CD4-positive, alpha-beta T cell (primary cell): ENCODE measurements at regions of chr6 and their contacts with region 1.

Region 1: GRCh38 chr6:14428269-14428668 is 310.7 kb downstream of the CD83 start:
- DNase-seq: no peak
- ATAC-seq: no peak
- H3K4me3 ChIP-seq: no peak overlapping the region
- H3K4me3 Mint-ChIP-seq: no peak overlapping the region
- H3K27ac ChIP-seq: no peak overlapping the region
- H3K27ac Mint-ChIP-seq: no peak overlapping the region
- H3K4me1 ChIP-seq: no peaks in the 10 kb centered on the region
- H3K4me1 Mint-ChIP-seq: no peaks in the 10 kb centered on the region
- H3K27me3 ChIP-seq: no peaks in the 10 kb centered on the region
- H3K27me3 Mint-ChIP-seq: no peaks in the 10 kb centered on the region
- CTCF ChIP-seq: no peak

Region 2: GRCh38 chr6:14448246-14448645 is 20.0 kb after region 1 on chr6:
- CTCF ChIA-PET with region 1: no interaction called
- POLR2A ChIA-PET with region 1: no interaction called
- intact Hi-C with region 1: loop called in 1 of 2 experiments (anchors 1 kb)
- DNase-seq: no peak
- ATAC-seq: no peak
- H3K4me3 ChIP-seq: no peak overlapping the region
- H3K4me3 Mint-ChIP-seq: no peak overlapping the region
- H3K27ac ChIP-seq: no peak overlapping the region
- H3K27ac Mint-ChIP-seq: no peak overlapping the region
- H3K4me1 ChIP-seq: peaks cover 30% of the 10 kb centered on the region
- H3K4me1 Mint-ChIP-seq: peaks cover 49% of the 10 kb centered on the region
- H3K27me3 ChIP-seq: no peaks in the 10 kb centered on the region
- H3K27me3 Mint-ChIP-seq: no peaks in the 10 kb centered on the region
- CTCF ChIP-seq: no peak